HEK293T (cell line): ENCODE measurements at regions of chr17 and their contacts with region 1.

Region 1: DNA sequence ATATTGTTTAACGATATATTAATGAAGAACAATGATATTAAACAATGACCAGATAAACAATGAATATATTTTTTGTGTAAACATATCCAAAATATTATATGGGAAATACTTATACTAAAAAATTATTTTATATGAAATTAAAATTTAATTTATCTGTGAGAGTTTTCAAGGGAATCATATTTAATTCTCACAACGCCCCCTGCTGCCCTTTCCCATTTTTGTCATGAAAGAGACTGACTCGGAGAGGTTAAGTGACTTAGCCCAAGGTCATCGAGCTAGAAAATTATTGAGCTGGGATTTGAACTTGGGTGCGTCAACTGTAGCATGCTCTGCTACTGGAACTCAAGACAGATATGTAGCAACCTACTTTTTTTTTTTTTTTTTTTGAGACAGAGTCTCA is 7.2 kb upstream of the MYCBPAP start:
- DNase-seq: no peak

Region 2: DNA sequence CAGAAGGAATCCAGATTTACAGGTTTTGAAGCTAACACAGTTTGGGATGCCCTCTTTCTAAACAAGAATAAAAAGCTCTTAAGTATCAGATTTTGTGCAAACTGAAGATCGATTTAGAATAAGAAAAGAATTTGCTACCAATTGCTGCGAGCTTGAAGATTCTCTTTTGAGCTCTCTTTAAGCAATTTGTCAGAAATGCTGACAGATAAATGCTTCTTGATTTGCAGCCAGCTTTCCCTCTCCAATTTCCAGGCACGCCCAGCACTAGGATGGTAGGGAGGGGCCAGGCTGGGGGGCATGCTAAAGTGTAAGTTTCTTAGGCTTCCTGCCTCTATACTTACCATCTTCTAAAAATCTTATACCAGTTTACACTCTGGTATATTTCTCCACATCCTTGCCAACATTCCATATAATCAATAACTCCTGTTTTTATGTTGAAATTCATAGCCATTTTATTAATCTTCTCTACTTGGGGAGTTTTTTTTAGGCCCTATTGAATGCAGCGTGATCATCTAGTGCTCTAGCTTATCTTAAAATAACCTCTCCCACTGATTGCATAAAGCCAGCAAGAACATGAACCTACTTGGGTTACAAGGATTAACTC is 57.6 kb before region 1 on chr17:
- CTCF ChIA-PET with region 1: no interaction called
- POLR2A ChIA-PET with region 1: no interaction called
- DNase-seq: peak; percentile 49

Region 3: DNA sequence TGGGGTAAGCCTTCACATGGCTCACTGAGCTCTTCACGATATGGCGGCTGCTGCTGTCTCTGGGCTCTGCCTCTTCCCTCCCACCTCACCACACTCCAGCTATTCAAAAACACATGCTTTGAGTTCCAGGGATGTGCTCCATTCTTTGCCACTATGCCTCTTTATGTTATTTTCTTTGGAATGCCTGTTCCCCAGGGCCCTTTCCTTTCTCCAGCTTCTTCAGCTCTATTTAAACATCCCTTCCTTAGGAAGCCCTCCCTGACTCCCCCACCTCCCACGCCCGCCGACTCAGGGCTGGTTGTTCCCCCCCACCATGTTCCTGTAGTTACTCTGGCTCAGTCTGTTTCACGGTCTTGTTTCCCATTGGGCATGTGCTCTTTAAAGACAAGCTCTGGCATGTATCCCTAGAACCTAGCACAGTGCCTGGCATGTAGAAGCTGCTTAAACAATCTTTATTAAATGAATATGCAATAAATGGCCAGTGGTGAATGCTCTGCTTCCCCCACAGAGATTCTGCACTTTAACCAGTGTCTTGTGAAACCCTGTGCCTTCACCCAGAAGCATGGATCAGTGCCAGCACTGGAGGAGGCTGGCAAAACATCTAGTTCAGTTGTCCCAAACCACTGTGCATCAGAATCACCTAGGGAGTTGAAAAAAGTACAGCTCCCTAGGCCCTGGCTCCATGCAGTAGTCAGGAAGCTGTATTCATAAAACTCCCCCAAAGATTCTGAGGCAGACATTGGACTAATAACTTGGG is 14.1 kb after region 1 on chr17:
- CTCF ChIA-PET with region 1: interaction called, 11 read pairs
- POLR2A ChIA-PET with region 1: no interaction called
- DNase-seq: no peak